Activated T-helper 2 cell treated with anti-CD3 and anti-CD28 coated beads, Interferon-gamma antibody, Interleukin-2, Interleukin-4, amounts not matched to agents 10 μg/mL and 5 μg/mL and 100 μg/mL, durations not matched to agents 14 hours and 24 hours and 36 hours (primary cell): ENCODE measurements at regions of chr3 and their contacts with region 1.

Region 1: GRCh38 chr3:120596116-120596852 is at the start of gene NDUFB4:
- DNase-seq: peak; percentile 95
- H3K4me3 Mint-ChIP-seq: peak within 1 kb of the TSS; percentile 89
- H3K27ac Mint-ChIP-seq: peak within 1 kb of the TSS; percentile 93
- H3K4me1 Mint-ChIP-seq: peaks cover 9% of the 10 kb centered on the region
- H3K27me3 Mint-ChIP-seq: peaks cover 9% of the 10 kb centered on the region
- total RNA-seq, gene NDUFB4: 142 and 154 TPM in 2 replicates

Region 2: DNA sequence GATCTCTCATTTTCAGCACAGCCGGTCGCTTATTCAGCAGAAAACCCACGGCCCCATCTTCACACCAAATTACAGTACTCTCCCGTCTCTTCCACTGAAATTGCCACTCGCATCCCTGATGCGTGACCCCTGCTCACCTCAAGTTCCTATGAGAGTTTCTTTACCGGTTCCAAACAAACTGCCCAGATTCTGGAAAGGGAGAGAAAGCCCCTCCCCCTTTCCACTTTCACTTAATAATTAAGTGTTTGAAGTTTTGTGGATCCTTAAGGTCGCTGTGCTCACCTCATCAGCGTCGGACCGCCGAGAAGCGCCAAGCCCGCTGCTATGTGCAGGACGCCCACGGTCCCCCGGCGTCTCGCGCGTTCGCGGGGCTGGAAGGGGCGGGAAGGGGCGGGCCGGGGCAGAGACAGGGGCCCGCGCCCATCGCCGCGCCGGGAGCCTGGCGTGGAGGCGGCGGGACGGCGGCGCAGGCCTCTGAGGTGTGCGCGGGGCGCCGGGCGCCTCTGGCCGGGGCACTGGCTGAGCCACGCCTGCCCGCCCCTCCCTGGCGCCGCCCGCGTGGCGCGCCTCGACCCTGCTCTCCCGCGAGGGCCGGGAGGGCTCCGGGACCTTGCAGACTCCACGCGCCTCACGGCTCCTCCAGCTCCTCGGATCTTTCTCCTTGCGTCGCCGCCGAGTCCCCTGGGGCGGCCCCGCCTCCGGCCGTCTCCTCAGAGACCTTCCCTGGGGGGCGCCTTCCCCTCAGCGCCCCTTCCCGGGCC is 311.4 kb before region 1 on chr3 and contains the start of gene GPR156:
- intact Hi-C with region 1: no loop called
- DNase-seq: no peak
- H3K4me3 Mint-ChIP-seq: no peak within 1 kb of the TSS
- H3K27ac Mint-ChIP-seq: no peak within 1 kb of the TSS
- H3K4me1 Mint-ChIP-seq: no peaks in the 10 kb centered on the region
- H3K27me3 Mint-ChIP-seq: peaks cover 54% of the 10 kb centered on the region
- total RNA-seq, gene GPR156: not detected in 2 replicates

Region 3: GRCh38 chr3:120338517-120338916 is 257.8 kb before region 1 on chr3:
- intact Hi-C with region 1: loop called (anchors 1 kb)
- DNase-seq: no peak
- H3K4me3 Mint-ChIP-seq: no peak overlapping the region
- H3K27ac Mint-ChIP-seq: no peak overlapping the region
- H3K4me1 Mint-ChIP-seq: peaks cover 20% of the 10 kb centered on the region
- H3K27me3 Mint-ChIP-seq: no peaks in the 10 kb centered on the region

Region 4: GRCh38 chr3:120450600-120451271 is 145.5 kb before region 1 on chr3 and contains the start of gene FSTL1:
- intact Hi-C with region 1: no loop called
- DNase-seq: no peak
- H3K4me3 Mint-ChIP-seq: peak within 1 kb of the TSS; percentile 73
- H3K27ac Mint-ChIP-seq: no peak within 1 kb of the TSS
- H3K4me1 Mint-ChIP-seq: peaks cover 4% of the 10 kb centered on the region
- H3K27me3 Mint-ChIP-seq: peaks cover 59% of the 10 kb centered on the region
- total RNA-seq, gene FSTL1: 0.14 and 0.16 TPM in 2 replicates

Region 5: DNA sequence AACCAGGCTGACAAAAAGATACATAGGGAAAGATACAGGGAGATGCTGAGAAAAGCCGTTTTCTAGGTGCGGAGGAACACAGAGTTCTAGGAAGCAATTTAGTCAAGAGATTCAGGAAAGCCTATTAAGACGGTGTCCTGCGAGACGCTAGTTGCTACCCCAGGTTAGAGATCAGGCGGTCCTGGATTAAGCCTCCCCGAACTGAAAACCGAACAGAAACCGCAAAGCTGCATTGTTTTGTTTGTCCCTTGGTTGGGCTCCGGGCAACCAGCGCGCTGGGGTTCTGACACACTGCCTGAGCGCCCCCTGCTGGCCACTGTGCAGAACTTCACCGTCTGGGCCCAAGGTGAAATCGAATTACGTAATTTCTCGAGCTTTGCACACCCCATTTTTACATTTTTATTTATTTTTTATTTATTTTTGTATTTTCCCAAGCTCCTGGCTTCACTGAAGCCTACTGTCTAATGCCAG is 37.5 kb before region 1 on chr3:
- intact Hi-C with region 1: loop called (anchors 2 kb)
- DNase-seq: peak; percentile 83
- H3K4me3 Mint-ChIP-seq: peak overlapping the region; percentile 78
- H3K27ac Mint-ChIP-seq: peak overlapping the region; percentile 58
- H3K4me1 Mint-ChIP-seq: peaks cover 10% of the 10 kb centered on the region
- H3K27me3 Mint-ChIP-seq: peaks cover 9% of the 10 kb centered on the region

Region 6: DNA sequence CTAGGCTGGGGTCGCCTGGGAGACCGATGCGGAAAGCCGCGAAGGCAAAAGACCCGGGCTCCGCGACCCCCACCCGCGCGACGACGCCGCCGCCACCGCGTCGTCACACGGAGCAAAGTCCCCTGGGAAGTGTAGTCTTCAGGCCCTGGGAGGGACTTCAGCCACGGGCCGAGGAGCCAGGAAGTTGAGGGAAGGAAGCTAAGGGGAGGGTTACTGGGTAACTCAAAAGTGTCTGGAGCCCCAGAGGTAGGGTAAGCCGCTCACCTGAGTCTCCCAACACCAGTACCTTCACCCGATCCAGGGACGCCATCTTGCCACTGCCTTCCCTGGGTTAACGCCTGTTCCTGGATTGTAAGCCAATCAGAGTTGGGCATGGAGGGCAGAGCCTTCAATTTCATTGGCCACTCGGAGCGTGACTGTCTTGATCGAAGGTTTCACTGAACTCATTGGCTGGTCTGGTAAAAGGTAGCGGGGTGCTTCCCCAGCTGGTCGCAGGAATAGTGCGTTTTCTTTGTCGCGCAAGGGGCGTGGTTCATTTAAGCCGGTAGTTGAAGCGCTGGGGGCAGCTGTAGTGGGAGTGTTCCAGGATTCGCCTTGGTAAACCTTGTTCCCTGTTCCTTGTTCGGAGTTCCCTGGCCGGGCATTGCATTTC is 146.0 kb after region 1 on chr3 and contains the starts of genes GTF2E1 and RABL3:
- intact Hi-C with region 1: loop called (anchors 1 kb)
- DNase-seq: peak; percentile 95
- H3K4me3 Mint-ChIP-seq: peak within 1 kb of the TSS; percentile 95
- H3K27ac Mint-ChIP-seq: peak within 1 kb of the TSS; percentile 97
- H3K4me1 Mint-ChIP-seq: peaks cover 15% of the 10 kb centered on the region
- H3K27me3 Mint-ChIP-seq: no peaks in the 10 kb centered on the region
- total RNA-seq, gene GTF2E1: 23.3 and 24.7 TPM in 2 replicates
- total RNA-seq, gene RABL3: 26.6 and 30.8 TPM in 2 replicates

Region 7: GRCh38 chr3:120795017-120795648 is 198.8 kb after region 1 on chr3:
- intact Hi-C with region 1: loop called (anchors 10 kb)
- DNase-seq: peak; percentile 70
- H3K4me3 Mint-ChIP-seq: no peak overlapping the region
- H3K27ac Mint-ChIP-seq: no peak overlapping the region
- H3K4me1 Mint-ChIP-seq: no peaks in the 10 kb centered on the region
- H3K27me3 Mint-ChIP-seq: no peaks in the 10 kb centered on the region